Mammary epithelial cell (primary cell): ENCODE measurements at regions of chr7 and their contacts with region 1.

Region 1: DNA sequence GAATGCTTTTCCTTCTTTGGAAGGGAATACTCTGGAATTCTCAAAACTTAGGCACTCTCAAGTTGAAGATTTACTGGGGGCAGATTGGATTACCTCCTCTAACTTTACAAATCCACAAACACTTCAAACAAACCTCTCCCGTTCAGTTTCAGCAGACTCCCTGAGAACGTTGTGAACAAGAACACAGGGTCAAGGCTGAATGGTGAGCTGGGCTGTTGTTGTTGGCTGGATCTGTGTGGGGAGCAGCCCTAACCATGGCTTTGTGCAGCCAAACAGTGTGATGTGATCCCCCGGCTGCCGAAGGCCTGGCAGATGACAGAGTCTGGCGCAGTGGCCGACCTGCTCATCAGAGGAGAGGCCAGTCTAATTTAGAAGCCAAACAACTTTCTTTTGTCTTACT is 93.1 kb downstream of the BMPER start:
- DNase-seq: no peak
- H3K4me3 ChIP-seq: no peak overlapping the region
- H3K27ac ChIP-seq: no peak overlapping the region
- H3K4me1 ChIP-seq: no peaks in the 10 kb centered on the region
- H3K27me3 ChIP-seq: no peaks in the 10 kb centered on the region
- CTCF ChIP-seq: no peak

Region 2: GRCh38 chr7:34048445-34048844 is 50.0 kb after region 1 on chr7:
- CTCF ChIA-PET with region 1: no interaction called
- dilution Hi-C with region 1: loop called (anchors 5 kb)
- in situ Hi-C with region 1: no loop called
- intact Hi-C with region 1: no loop called
- DNase-seq: no peak
- H3K4me3 ChIP-seq: no peak overlapping the region
- H3K27ac ChIP-seq: no peak overlapping the region
- H3K4me1 ChIP-seq: no peaks in the 10 kb centered on the region
- H3K27me3 ChIP-seq: peaks cover 6% of the 10 kb centered on the region
- CTCF ChIP-seq: no peak

Region 3: GRCh38 chr7:34184466-34184865 is 186.0 kb after region 1 on chr7:
- CTCF ChIA-PET with region 1: no interaction called
- dilution Hi-C with region 1: no loop called
- in situ Hi-C with region 1: no loop called
- intact Hi-C with region 1: no loop called
- DNase-seq: no peak
- H3K4me3 ChIP-seq: no peak overlapping the region
- H3K27ac ChIP-seq: no peak overlapping the region
- H3K4me1 ChIP-seq: no peaks in the 10 kb centered on the region
- H3K27me3 ChIP-seq: no peaks in the 10 kb centered on the region
- CTCF ChIP-seq: peak; percentile 16 to 18